Transverse colon (tissue), 4 donors: ENCODE measurements at regions of chr15 and their contacts with region 1.

Region 1: GRCh38 chr15:40684381-40684780 is 10.6 kb upstream of the RAD51 start:
- DNase-seq: no peak
- H3K4me3 ChIP-seq: no peak overlapping the region
- H3K27ac ChIP-seq: no peak overlapping the region
- H3K4me1 ChIP-seq: no peaks in the 10 kb centered on the region
- H3K27me3 ChIP-seq: no peaks in the 10 kb centered on the region
- CTCF ChIP-seq: no peak
- EP300 ChIP-seq: no peak
- POLR2A ChIP-seq: no peak

Region 2: GRCh38 chr15:40769274-40770146 is 85.1 kb after region 1 on chr15 and contains the start of gene C15orf62:
- in situ Hi-C with region 1: loop called in 1 of 4 experiments (anchors 10 kb)
- intact Hi-C with region 1: no loop called
- DNase-seq: peak; percentile 66
- H3K4me3 ChIP-seq: peak within 1 kb of the TSS in 1 of 4 donors; percentile 5
- H3K27ac ChIP-seq: peak within 1 kb of the TSS; percentile 77 to 88 (median 80)
- H3K4me1 ChIP-seq: peaks cover 19 to 52% (median 46%) of the 10 kb centered on the region in 4 donors
- H3K27me3 ChIP-seq: no peaks in the 10 kb centered on the region
- CTCF ChIP-seq: no peak
- EP300 ChIP-seq: no peak
- POLR2A ChIP-seq: no peak
- total RNA-seq, gene C15orf62: 0.14 to 0.32 TPM in 2 of 4 donors, not detected in the others